Right lobe of liver (tissue), 6 donors: ENCODE measurements at regions of chr7 and their contacts with region 1.

Region 1: GRCh38 chr7:151315038-151315655 is 26.5 kb upstream of the NUB1 start:
- DNase-seq: peak in 2 of 3 donors; percentile 41 to 68
- ATAC-seq: peak; percentile 88 to 95 (median 90)
- H3K4me3 ChIP-seq: no peak overlapping the region
- H3K27ac ChIP-seq: no peak overlapping the region
- H3K4me1 ChIP-seq: no peaks in the 10 kb centered on the region
- H3K27me3 ChIP-seq: no peaks in the 10 kb centered on the region
- CTCF ChIP-seq: peak; percentile 78 to 85 (median 83)
- POLR2A ChIP-seq: no peak

Region 2: GRCh38 chr7:151351027-151351426 is 35.9 kb after region 1 on chr7:
- intact Hi-C with region 1: loop called in 1 of 2 experiments (anchors 5 kb)
- DNase-seq: no peak
- ATAC-seq: peak in 1 of 4 donors; percentile 21
- H3K4me3 ChIP-seq: no peak overlapping the region
- H3K27ac ChIP-seq: no peak overlapping the region
- H3K4me1 ChIP-seq: peaks cover 0 to 11% (median 5%) of the 10 kb centered on the region in 4 donors
- H3K27me3 ChIP-seq: no peaks in the 10 kb centered on the region
- CTCF ChIP-seq: peak in 2 of 4 donors; percentile 15 to 16
- POLR2A ChIP-seq: no peak

Region 3: DNA sequence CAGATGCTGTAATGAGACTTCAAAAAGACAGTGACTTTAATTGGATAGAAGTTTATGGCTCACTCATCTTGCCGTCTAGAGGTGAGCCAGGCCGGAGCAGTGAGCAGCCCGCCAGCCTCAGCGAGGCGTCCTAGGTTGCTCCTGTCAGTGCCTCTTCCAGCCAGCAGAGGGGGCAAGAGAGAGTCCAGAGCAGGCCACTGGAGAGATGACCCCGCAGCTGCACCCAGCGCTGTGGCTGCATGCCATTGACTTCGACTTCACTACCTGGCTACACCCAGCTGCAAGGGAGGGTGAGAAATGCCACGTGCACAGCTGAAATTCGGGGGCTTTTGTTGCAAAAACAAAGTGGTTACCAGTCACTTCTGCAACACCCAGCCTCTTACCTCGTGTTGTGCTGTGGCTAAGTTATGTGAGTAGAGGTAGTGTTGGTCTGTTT is 53.0 kb after region 1 on chr7:
- intact Hi-C with region 1: no loop called
- DNase-seq: peak; percentile 87 to 91 (median 90)
- ATAC-seq: peak; percentile 99 to 100 (median 100)
- H3K4me3 ChIP-seq: no peak overlapping the region
- H3K27ac ChIP-seq: no peak overlapping the region
- H3K4me1 ChIP-seq: peaks cover 0 to 11% (median 0%) of the 10 kb centered on the region in 4 donors
- H3K27me3 ChIP-seq: no peaks in the 10 kb centered on the region
- CTCF ChIP-seq: peak; percentile 95 to 98 (median 97)
- POLR2A ChIP-seq: no peak

Region 4: DNA sequence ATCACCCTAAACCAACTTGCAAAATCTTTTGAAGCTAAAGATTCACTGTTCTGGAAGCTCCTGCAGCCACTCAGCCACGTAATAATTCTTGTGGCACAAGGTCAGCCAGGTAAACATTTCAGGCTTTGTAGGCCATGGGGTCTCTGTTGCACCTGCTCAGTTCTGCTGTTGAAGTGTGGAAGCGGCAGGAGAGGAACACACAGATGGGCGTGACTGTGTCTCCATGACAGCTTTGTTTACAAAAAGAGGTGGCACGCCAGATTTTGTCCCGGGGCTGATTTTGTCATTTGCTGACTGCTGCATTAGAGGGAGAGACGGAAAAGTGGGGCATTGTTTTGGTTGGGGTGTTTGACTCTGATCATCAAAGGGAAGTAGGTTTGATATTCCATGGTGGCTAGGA is 458.6 kb after region 1 on chr7:
- intact Hi-C with region 1: no loop called
- DNase-seq: peak in 1 of 3 donors; percentile 39
- ATAC-seq: peak; percentile 44 to 72 (median 58)
- H3K4me3 ChIP-seq: no peak overlapping the region
- H3K27ac ChIP-seq: no peak overlapping the region
- H3K4me1 ChIP-seq: peaks cover 0 to 8% (median 1%) of the 10 kb centered on the region in 4 donors
- H3K27me3 ChIP-seq: no peaks in the 10 kb centered on the region
- CTCF ChIP-seq: no peak
- POLR2A ChIP-seq: no peak